Heart right ventricle (tissue), 16 donors: ENCODE measurements at regions of chr15 and their contacts with region 1.

Region 1: DNA sequence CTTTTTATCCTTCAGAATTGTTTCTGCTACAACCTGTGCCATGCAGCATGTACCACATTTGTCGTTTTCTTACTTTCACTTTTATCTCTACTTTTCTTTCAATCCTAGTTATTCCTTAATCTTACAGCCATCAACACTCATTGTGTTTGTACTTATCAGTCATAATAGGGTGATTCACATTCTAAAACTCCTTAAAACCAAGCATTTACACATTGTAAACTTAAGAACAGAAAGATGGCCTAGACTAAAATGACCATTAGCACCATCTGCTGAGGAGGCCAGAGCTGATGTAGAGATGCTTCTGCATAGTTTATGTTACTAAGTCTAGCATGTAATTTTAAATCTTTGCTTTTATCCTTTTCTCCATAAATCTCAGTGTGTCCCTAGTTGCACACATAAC is 25.5 kb downstream of the EIF2AK4 start:
- DNase-seq: no peak
- ATAC-seq: no peak
- H3K4me3 ChIP-seq: no peak overlapping the region
- H3K27ac ChIP-seq: no peak overlapping the region
- H3K4me1 ChIP-seq: no peaks in the 10 kb centered on the region
- H3K27me3 ChIP-seq: no peaks in the 10 kb centered on the region
- CTCF ChIP-seq: no peak

Region 2: GRCh38 chr15:40002295-40002694 is 42.9 kb after region 1 on chr15:
- intact Hi-C with region 1: loop called in 1 of 10 experiments (anchors 10 kb)
- DNase-seq: no peak
- ATAC-seq: no peak
- H3K4me3 ChIP-seq: no peak overlapping the region
- H3K27ac ChIP-seq: no peak overlapping the region
- H3K4me1 ChIP-seq: no peaks in the 10 kb centered on the region
- H3K27me3 ChIP-seq: no peaks in the 10 kb centered on the region
- CTCF ChIP-seq: no peak

Region 3: GRCh38 chr15:40016224-40016865 is 56.9 kb after region 1 on chr15:
- intact Hi-C with region 1: no loop called
- DNase-seq: no peak
- ATAC-seq: no peak
- H3K4me3 ChIP-seq: no peak overlapping the region
- H3K27ac ChIP-seq: no peak overlapping the region
- H3K4me1 ChIP-seq: peaks cover 0 to under 1% (median 0%) of the 10 kb centered on the region in 9 donors
- H3K27me3 ChIP-seq: no peaks in the 10 kb centered on the region
- CTCF ChIP-seq: no peak

Region 4: DNA sequence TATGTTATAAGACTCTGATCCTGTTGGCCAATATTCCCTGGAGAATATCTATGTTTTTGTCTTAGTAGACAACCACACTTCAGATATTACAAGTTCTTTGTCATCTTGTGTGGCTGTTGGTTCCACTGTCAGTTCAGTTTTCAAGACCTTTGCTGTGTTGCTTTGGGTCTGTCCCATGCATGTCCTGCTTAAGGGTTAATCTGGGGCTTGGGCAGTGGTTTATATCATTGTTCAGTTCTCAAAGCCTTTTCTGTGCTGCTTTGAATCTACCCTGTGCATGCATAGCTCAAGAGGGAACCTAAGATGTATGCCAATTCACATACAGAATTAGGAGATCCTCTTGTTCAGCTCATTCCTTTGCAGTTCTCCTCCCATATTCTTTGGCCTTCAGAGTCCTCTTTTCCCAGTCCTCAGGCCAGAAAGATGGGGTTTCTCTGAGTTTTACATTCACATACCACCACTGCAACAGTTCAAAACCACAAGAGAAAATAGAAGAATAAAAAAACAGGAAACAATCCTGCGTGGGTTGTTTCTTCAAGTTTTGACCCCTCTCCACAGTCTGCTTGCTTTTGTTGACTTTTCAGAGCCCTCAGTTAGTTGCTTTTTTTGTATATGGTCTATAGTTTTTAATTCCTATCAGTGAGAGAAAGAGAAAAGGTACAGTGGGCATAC is 223.1 kb after region 1 on chr15:
- intact Hi-C with region 1: no loop called
- DNase-seq: no peak
- ATAC-seq: no peak
- H3K4me3 ChIP-seq: no peak overlapping the region
- H3K27ac ChIP-seq: peak overlapping the region in 1 of 10 donors; percentile 21
- H3K4me1 ChIP-seq: peaks cover 0 to 15% (median 0%) of the 10 kb centered on the region in 9 donors
- H3K27me3 ChIP-seq: no peaks in the 10 kb centered on the region
- CTCF ChIP-seq: no peak